MCF 10A (cell line): ENCODE measurements at regions of chr7 and their contacts with region 1.

Region 1: GRCh38 chr7:30594549-30595435 is at the start of gene GARS1:
- DNase-seq: peak; percentile 89
- H3K4me3 Mint-ChIP-seq: peak within 1 kb of the TSS; percentile 99
- H3K27ac Mint-ChIP-seq: peak within 1 kb of the TSS; percentile 99
- H3K4me1 Mint-ChIP-seq: peaks cover 13% of the 10 kb centered on the region
- H3K27me3 Mint-ChIP-seq: no peaks in the 10 kb centered on the region
- CTCF ChIP-seq: no peak
- total RNA-seq, gene GARS1: 325 and 386 TPM in 2 replicates

Region 2: GRCh38 chr7:30369879-30370278 is 224.9 kb before region 1 on chr7:
- CTCF ChIA-PET with region 1: no interaction called
- POLR2A ChIA-PET with region 1: no interaction called
- intact Hi-C with region 1: no loop called
- DNase-seq: no peak
- H3K4me3 Mint-ChIP-seq: no peak overlapping the region
- H3K27ac Mint-ChIP-seq: no peak overlapping the region
- H3K4me1 Mint-ChIP-seq: peaks cover 6% of the 10 kb centered on the region
- H3K27me3 Mint-ChIP-seq: no peaks in the 10 kb centered on the region
- CTCF ChIP-seq: no peak

Region 3: GRCh38 chr7:30604901-30605300 is 10.1 kb after region 1 on chr7:
- CTCF ChIA-PET with region 1: no interaction called
- POLR2A ChIA-PET with region 1: interaction called, 10 read pairs
- intact Hi-C with region 1: no loop called
- DNase-seq: no peak
- H3K4me3 Mint-ChIP-seq: no peak overlapping the region
- H3K27ac Mint-ChIP-seq: peak overlapping the region; percentile 21
- H3K4me1 Mint-ChIP-seq: peaks cover 12% of the 10 kb centered on the region
- H3K27me3 Mint-ChIP-seq: no peaks in the 10 kb centered on the region
- CTCF ChIP-seq: no peak